Activated CD4-positive, alpha-beta T cell treated with anti-CD3 and anti-CD28 coated beads for 36 hours (primary cell): ENCODE measurements at regions of chr6 and their contacts with region 1.

Region 1: GRCh38 chr6:105397987-105398386 is 4.9 kb downstream of the PREP start:
- DNase-seq: no peak
- ATAC-seq: no peak
- H3K4me3 Mint-ChIP-seq: no peak overlapping the region
- H3K27ac Mint-ChIP-seq: no peak overlapping the region
- H3K4me1 Mint-ChIP-seq: peaks cover 46% of the 10 kb centered on the region
- H3K27me3 Mint-ChIP-seq: no peaks in the 10 kb centered on the region

Region 2: DNA sequence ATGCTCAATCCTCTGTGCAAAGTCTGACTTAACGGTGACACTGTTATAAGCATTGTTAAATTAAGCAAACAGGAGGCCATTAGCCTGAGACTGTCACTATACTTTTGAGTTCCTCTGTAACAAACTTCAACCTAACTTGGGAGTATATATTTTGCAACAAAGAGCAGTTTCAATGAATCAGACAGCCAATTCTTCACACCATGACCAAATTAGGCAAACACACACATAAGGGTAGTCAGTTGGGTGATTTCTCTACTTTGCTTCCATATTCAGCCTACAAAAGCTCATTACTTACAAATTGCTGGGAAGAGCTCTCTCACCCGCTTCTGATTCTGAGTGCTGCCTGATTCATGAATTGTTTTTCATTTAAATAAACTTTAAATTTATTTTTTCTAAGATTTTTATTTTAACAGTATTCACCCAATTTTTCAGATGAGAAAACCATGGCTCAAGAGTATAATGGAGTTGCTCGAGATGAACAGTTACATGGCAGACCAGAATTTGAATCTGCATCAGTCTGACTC is 598.8 kb before region 1 on chr6:
- CTCF ChIA-PET with region 1: no interaction called
- POLR2A ChIA-PET with region 1: no interaction called
- intact Hi-C with region 1: no loop called
- DNase-seq: no peak
- ATAC-seq: peak; percentile 49
- H3K4me3 Mint-ChIP-seq: no peak overlapping the region
- H3K27ac Mint-ChIP-seq: no peak overlapping the region
- H3K4me1 Mint-ChIP-seq: no peaks in the 10 kb centered on the region
- H3K27me3 Mint-ChIP-seq: no peaks in the 10 kb centered on the region

Region 3: DNA sequence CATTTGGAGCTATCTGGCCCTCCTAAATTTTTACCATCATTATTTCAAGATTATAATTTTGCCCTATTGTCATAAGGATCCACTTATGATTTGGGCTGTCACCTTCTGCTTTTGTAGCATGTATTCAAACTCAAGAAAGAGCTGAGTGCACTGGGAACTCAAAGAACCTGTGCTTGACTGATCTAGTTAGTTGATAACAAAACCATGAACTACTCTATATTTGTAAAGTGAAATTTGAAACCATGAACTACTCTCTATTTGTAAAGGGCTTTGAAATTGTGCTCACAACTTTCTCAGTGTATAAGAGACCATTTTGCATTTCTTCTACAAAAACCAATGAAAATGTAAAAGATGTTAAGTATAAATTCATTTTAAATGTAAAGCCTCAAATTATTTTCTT is 140.6 kb before region 1 on chr6:
- CTCF ChIA-PET with region 1: no interaction called
- POLR2A ChIA-PET with region 1: interaction called, 12 read pairs
- intact Hi-C with region 1: no loop called
- DNase-seq: no peak
- ATAC-seq: no peak
- H3K4me3 Mint-ChIP-seq: no peak overlapping the region
- H3K27ac Mint-ChIP-seq: no peak overlapping the region
- H3K4me1 Mint-ChIP-seq: no peaks in the 10 kb centered on the region
- H3K27me3 Mint-ChIP-seq: peaks cover 5% of the 10 kb centered on the region